Panc1 (cell line): ENCODE measurements at regions of chr20 and their contacts with region 1.

Region 1: GRCh38 chr20:37856932-37857660 is 45.8 kb upstream of the VSTM2L start:
- DNase-seq: no peak
- ATAC-seq: no peak
- H3K4me3 ChIP-seq: no peak overlapping the region
- H3K27ac ChIP-seq: no peak overlapping the region
- H3K4me1 ChIP-seq: no peaks in the 10 kb centered on the region
- H3K27me3 ChIP-seq: no peaks in the 10 kb centered on the region
- CTCF ChIP-seq: no peak

Region 2: DNA sequence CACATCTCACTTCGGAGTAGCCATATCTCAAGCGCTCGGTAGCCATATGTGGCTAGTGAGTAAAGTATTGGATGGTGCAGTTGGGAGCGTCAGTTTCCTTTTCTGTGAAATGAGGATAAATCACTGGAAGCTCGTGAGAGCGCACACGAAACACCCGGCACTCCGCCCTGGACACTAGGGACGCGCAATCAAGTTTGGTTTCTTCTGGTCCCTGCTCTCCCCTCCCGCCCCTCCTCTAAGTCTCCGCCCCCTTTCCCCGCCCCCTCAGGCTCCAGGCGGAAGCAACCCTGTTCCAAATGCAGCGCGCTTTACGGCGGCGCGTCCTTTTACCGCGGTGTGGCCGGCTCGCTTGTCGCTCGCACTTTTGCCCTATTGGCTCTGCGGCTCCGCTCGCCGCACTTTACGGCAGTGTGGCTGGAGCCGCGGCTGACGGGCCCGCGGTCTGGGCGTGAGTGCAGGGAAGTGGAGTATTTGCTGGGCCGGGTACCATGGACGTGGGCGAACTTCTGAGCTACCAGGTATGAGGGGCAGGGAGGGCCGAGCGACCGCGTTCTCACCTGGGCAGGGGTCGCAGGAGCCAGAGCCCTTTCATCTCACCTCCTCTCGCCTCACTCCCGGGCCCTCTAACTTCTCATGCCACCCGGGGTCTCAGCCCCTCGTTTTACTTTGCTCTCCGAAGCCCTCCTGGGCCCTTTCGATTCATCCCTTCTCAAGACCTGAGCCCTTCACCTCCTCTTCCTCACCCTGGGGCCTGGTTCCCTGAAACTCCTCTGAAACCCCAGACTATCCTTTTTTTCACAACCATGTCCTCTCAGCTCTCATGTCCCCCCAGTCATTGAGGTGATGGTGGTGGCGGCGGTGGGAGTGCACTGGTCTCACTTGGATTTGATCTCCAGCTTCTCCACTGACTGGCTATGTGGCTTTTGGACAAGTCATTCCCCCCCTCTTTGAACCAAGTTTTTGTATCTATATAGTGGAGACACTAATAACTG is 163.2 kb before region 1 on chr20 and contains the start of gene CTNNBL1:
- CTCF ChIA-PET with region 1: no interaction called
- POLR2A ChIA-PET with region 1: interaction called, 13 read pairs
- in situ Hi-C with region 1: no loop called
- intact Hi-C with region 1: no loop called
- DNase-seq: peak; percentile 93
- ATAC-seq: peak; percentile 98
- H3K4me3 ChIP-seq: peak within 1 kb of the TSS; percentile 92 to 98
- H3K27ac ChIP-seq: peak within 1 kb of the TSS; percentile 88
- H3K4me1 ChIP-seq: 0 out of 2 replicates have a peak, but pooled peaks cover 5% of the 10 kb centered on the region
- H3K27me3 ChIP-seq: peaks cover 3% of the 10 kb centered on the region
- CTCF ChIP-seq: no peak
- total RNA-seq, gene CTNNBL1: 71.2 TPM

Region 3: GRCh38 chr20:37789408-37789807 is 67.7 kb before region 1 on chr20:
- CTCF ChIA-PET with region 1: no interaction called
- POLR2A ChIA-PET with region 1: no interaction called
- in situ Hi-C with region 1: no loop called
- intact Hi-C with region 1: no loop called
- DNase-seq: no peak
- ATAC-seq: no peak
- H3K4me3 ChIP-seq: no peak overlapping the region
- H3K27ac ChIP-seq: no peak overlapping the region
- H3K4me1 ChIP-seq: no peaks in the 10 kb centered on the region
- H3K27me3 ChIP-seq: no peaks in the 10 kb centered on the region
- CTCF ChIP-seq: no peak